Esophagus muscularis mucosa (tissue), 4 donors: ENCODE measurements at regions of chr5 and their contacts with region 1.

Region 1: GRCh38 chr5:134304311-134304710 is 62.7 kb downstream of the CDKL3 start:
- DNase-seq: no peak
- H3K4me3 ChIP-seq: no peak overlapping the region
- H3K27ac ChIP-seq: no peak overlapping the region
- H3K4me1 ChIP-seq: peaks cover 0 to 4% (median 4%) of the 10 kb centered on the region in 4 donors
- H3K27me3 ChIP-seq: no peaks in the 10 kb centered on the region
- CTCF ChIP-seq: no peak
- EP300 ChIP-seq: no peak
- POLR2A ChIP-seq: no peak

Region 2: GRCh38 chr5:134204575-134204974 is 99.7 kb before region 1 on chr5:
- intact Hi-C with region 1: no loop called
- DNase-seq: no peak
- H3K4me3 ChIP-seq: no peak overlapping the region
- H3K27ac ChIP-seq: no peak overlapping the region
- H3K4me1 ChIP-seq: peaks cover 27 to 35% (median 34%) of the 10 kb centered on the region in 4 donors
- H3K27me3 ChIP-seq: no peaks in the 10 kb centered on the region
- CTCF ChIP-seq: no peak
- EP300 ChIP-seq: no peak
- POLR2A ChIP-seq: no peak

Region 3: GRCh38 chr5:134586866-134587524 is 282.7 kb after region 1 on chr5:
- intact Hi-C with region 1: loop called (anchors 2 kb)
- DNase-seq: no peak
- H3K4me3 ChIP-seq: peak overlapping the region in 1 of 4 donors; percentile 16
- H3K27ac ChIP-seq: peak overlapping the region in 2 of 4 donors; percentile 8 to 16
- H3K4me1 ChIP-seq: peaks cover 20 to 23% (median 21%) of the 10 kb centered on the region in 4 donors
- H3K27me3 ChIP-seq: no peaks in the 10 kb centered on the region
- CTCF ChIP-seq: peak; percentile 74 to 85 (median 76)
- EP300 ChIP-seq: no peak
- POLR2A ChIP-seq: no peak